ENCODE measurements at regions of chr5 and their contacts with region 1.

Region 1: DNA sequence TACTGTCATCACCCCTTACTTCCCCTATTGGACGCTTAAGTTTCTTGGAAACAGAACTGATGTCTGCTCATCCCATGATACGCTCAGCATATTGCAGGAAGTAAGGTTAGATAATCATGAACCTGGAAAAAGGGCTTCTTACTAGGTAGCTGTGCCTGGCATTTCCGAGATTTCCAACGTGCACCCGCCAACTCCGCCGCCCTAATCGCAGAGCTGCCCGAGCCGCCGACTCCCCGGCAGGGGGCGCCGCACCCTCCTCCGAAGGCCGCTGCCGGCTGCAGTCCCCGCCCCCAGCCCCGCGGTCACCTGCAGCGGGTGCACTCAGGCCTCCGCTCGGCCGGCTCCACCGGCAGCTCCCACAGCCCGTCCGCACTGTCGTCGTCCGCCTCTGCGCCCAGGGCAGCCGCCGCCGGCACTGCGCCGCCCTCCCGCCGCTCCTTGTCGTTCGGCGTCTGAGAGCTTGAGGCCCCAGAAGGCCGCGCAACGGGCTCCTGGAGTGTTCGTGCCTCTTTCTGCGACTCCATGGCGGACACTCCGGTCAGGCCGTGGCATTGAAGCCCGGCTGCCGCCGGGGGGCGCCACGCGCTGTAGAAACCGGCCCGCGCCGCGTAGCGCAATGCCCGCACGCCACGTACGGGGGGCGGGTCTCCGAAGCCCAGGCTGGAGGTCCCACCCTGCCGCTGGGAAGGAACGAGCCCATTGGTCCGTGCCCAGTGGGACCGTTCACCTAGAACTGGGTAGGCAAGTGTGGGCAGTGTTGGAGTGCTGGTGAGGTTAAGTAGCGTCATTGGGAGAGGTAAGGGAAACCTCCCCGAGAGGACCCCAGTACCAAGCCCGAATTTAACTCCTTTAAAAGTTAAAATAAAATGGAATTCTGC is at the start of gene DTWD2:
- DNase-seq: peak; percentile 97
- H3K4me3 ChIP-seq: peak within 1 kb of the TSS; percentile 65
- H3K27ac ChIP-seq: peak within 1 kb of the TSS; percentile 91
- H3K4me1 ChIP-seq: peaks cover 18% of the 10 kb centered on the region
- H3K27me3 ChIP-seq: no peaks in the 10 kb centered on the region
- CTCF ChIP-seq: peak; percentile 95
- total RNA-seq, gene DTWD2: 7.9 and 12.1 TPM in 2 replicates

Region 2: DNA sequence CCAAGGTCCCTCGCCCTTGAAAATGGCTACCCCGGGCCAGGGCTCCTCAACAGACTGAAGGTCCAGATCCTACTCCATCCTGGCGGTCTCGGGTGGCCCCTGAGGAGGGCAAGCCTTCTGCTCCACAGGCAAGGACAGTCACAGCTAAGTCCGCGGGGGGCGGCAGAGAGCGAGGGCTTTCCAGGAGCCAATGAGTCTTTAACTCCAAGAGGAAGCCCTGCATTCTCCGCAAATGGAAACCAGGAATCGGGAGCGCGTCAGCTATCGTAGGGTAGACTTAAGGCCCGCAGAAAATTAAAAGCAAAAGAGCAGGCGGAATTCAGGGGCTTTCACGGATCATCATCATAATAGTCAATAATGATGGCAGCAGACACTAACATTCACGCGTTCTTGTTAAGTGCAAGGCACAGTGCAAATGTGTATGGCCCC is 279.7 kb after region 1 on chr5:
- CTCF ChIA-PET with region 1: interaction called, 3 read pairs
- POLR2A ChIA-PET with region 1: no interaction called
- intact Hi-C with region 1: loop called (anchors 2 kb)
- DNase-seq: peak; percentile 97
- H3K4me3 ChIP-seq: peak overlapping the region; percentile 84
- H3K27ac ChIP-seq: peak overlapping the region; percentile 65
- H3K4me1 ChIP-seq: no peaks in the 10 kb centered on the region
- H3K27me3 ChIP-seq: no peaks in the 10 kb centered on the region
- CTCF ChIP-seq: peak; percentile 72

Region 3: GRCh38 chr5:119322948-119323537 is 334.8 kb after region 1 on chr5:
- CTCF ChIA-PET with region 1: no interaction called
- POLR2A ChIA-PET with region 1: no interaction called
- intact Hi-C with region 1: loop called (anchors 5 kb)
- DNase-seq: no peak
- H3K4me3 ChIP-seq: no peak overlapping the region
- H3K27ac ChIP-seq: peak overlapping the region; percentile 31
- H3K4me1 ChIP-seq: peaks cover 20% of the 10 kb centered on the region
- H3K27me3 ChIP-seq: no peaks in the 10 kb centered on the region
- CTCF ChIP-seq: no peak

Region 4: DNA sequence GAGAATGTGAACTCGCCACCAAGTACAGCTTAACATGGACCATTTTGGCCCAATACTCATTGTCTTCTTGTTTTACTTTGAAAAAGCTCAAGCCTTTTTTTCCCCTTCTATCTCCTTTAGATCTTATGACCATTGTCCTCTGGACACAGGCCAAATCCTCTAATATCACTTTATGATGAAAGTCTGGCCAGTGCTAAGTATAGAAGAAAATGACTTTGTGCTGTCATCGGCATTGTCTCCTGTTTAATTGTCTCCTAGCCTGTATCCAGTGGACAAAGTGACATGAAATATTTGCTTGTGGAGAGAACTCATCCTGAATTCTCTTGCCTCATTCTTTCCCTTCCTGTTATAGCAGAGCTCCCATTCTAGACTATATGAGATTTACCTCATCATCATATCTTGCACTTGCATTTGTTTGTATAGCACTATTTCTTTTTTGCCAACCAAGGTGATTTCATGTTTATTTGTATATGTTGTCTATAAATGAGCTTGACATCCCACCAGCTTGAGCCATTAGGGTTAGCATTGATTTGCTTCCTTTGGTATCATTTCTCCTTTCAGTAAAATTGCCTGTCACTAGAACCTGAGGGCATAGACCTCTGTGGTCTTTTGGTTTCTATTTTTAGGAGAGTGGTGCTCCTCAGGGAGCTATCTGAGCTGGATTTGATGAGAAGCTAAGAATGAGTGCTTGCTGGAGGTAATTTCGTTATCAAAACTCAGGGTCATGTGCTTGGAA is 348.8 kb after region 1 on chr5:
- CTCF ChIA-PET with region 1: no interaction called
- POLR2A ChIA-PET with region 1: no interaction called
- intact Hi-C with region 1: loop called (anchors 5 kb)
- DNase-seq: no peak
- H3K4me3 ChIP-seq: no peak overlapping the region
- H3K27ac ChIP-seq: no peak overlapping the region
- H3K4me1 ChIP-seq: no peaks in the 10 kb centered on the region
- H3K27me3 ChIP-seq: no peaks in the 10 kb centered on the region
- CTCF ChIP-seq: no peak

Region 5: GRCh38 chr5:119743927-119744326 is 755.7 kb after region 1 on chr5:
- CTCF ChIA-PET with region 1: no interaction called
- POLR2A ChIA-PET with region 1: no interaction called
- intact Hi-C with region 1: loop called (anchors 5 kb)
- DNase-seq: peak; percentile 66
- H3K4me3 ChIP-seq: no peak overlapping the region
- H3K27ac ChIP-seq: no peak overlapping the region
- H3K4me1 ChIP-seq: no peaks in the 10 kb centered on the region
- H3K27me3 ChIP-seq: peaks cover 22% of the 10 kb centered on the region
- CTCF ChIP-seq: peak; percentile 64

Region 6: GRCh38 chr5:120568711-120569110 is 1580.5 kb after region 1 on chr5:
- CTCF ChIA-PET with region 1: no interaction called
- POLR2A ChIA-PET with region 1: no interaction called
- intact Hi-C with region 1: no loop called
- DNase-seq: no peak
- H3K4me3 ChIP-seq: no peak overlapping the region
- H3K27ac ChIP-seq: no peak overlapping the region
- H3K4me1 ChIP-seq: no peaks in the 10 kb centered on the region
- H3K27me3 ChIP-seq: no peaks in the 10 kb centered on the region
- CTCF ChIP-seq: no peak